ENCODE measurements at regions of chr11 and their contacts with region 1.

Region 1: GRCh38 chr11:56764976-56765375 is 16.5 kb upstream of the OR9G4 start:
- DNase-seq: no peak
- H3K4me3 ChIP-seq: no peak overlapping the region
- CTCF ChIP-seq: no peak

Region 2: DNA sequence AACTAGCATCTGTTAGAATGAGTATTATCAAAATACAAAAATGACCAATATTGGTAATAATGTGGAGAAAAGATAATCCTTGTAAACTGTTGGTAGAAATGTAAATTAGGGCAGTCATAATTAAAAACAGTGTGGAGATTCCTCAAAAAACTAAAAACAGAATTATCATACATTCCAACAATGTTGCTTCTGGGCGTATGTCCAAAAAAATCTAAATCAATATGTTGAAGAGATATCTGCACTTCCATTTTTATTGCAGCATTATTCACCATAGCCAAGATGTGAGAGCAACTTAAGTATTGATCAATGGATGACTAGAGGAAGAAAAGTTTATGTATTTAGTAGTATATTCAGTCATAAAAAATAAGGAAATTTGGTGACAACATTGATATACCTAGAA is 43.4 kb after region 1 on chr11:
- in situ Hi-C with region 1: loop called (anchors 5 kb)
- DNase-seq: no peak
- H3K4me3 ChIP-seq: no peak overlapping the region
- CTCF ChIP-seq: no peak